ENCODE measurements at regions of chr3 and their contacts with region 1.

Region 1: DNA sequence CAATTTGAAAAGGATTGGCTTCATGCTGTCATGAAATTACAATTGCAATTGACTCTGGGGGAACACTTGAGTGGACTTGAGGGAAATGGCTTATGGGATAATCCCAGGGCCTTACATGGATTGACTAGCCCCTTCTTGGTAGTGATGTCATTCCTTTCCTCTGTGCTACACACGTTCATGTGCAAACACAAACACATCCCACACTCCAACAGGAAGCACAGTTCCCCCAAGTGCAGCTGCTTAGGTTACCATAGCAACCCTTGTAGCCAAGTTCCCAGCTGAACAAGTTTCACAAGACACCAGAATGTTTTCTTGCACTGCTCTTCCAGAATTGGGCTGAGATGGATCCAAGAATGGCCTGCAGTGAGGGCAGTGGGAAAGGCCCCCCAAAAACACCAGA is 217.0 kb downstream of the ZNF621 start:
- DNase-seq: peak; percentile 30 to 34
- ATAC-seq: peak; percentile 45 to 75
- H3K4me3 ChIP-seq: no peak overlapping the region
- H3K27ac ChIP-seq: peak overlapping the region in 1 of 4 donors; percentile 7
- H3K4me1 ChIP-seq: no peaks in the 10 kb centered on the region
- H3K27me3 ChIP-seq: no peaks in the 10 kb centered on the region
- CTCF ChIP-seq: no peak
- POLR2A ChIP-seq: no peak

Region 2: DNA sequence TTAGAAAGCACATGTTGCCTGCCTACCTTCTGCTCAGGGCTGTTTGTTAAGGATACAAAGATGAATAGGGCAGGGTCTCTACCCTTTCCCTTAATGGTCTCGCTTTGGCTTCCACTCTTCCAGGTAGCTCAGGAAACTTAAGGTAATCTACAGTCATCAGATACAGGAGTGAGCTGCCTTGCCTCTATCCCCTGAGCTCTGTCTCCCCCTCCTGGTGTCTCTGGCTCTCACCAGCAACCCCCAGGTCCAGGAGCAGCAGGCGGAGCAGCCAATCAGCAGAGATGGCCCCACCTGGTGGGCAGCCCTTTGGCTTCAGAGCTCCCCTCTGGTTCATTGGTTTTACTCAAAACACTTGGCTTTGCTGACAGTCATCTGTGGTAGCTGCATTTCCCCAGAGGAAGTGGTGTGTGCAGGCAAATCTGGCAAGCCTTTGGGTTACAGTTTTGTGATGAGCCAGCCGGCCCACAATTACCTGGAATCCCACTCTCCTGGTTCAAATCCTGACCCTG is 1453.4 kb before region 1 on chr3:
- in situ Hi-C with region 1: no loop called
- intact Hi-C with region 1: no loop called
- DNase-seq: peak; percentile 74 to 83
- ATAC-seq: peak; percentile 83
- H3K4me3 ChIP-seq: no peak overlapping the region
- H3K27ac ChIP-seq: peak overlapping the region; percentile 80 to 87 (median 84)
- H3K4me1 ChIP-seq: peaks cover 21 to 25% of the 10 kb centered on the region in 2 donors
- H3K27me3 ChIP-seq: no peaks in the 10 kb centered on the region
- CTCF ChIP-seq: peak; percentile 87 to 93 (median 90)
- POLR2A ChIP-seq: no peak

Region 3: GRCh38 chr3:40680685-40681657 is 60.8 kb before region 1 on chr3:
- in situ Hi-C with region 1: no loop called
- intact Hi-C with region 1: no loop called
- DNase-seq: peak in 1 of 2 donors; percentile 23
- ATAC-seq: peak in 1 of 2 donors; percentile 46
- H3K4me3 ChIP-seq: no peak overlapping the region
- H3K27ac ChIP-seq: no peak overlapping the region
- H3K4me1 ChIP-seq: no peaks in the 10 kb centered on the region
- H3K27me3 ChIP-seq: no peaks in the 10 kb centered on the region
- CTCF ChIP-seq: no peak
- POLR2A ChIP-seq: no peak

Region 4: DNA sequence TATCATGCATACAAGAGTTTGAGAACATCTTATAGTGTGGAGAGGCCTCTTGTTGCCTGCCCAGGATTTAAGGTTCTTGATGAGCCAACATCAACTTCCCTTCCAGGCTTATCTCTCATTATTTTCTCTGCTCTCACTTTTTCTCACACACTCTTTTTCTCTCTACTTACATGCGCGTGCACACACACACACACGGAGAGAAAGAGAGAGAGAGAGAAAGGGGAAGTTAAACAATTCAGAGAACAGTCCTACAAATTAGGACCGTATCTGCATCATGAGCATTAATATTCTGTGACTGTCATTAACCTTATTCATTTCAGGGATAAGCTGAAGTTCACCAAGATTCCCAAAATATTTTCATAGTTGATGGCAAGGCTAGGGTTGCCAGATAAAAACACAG is 52.0 kb after region 1 on chr3:
- in situ Hi-C with region 1: no loop called
- intact Hi-C with region 1: loop called (anchors 10 kb)
- DNase-seq: no peak
- ATAC-seq: no peak
- H3K4me3 ChIP-seq: no peak overlapping the region
- H3K27ac ChIP-seq: no peak overlapping the region
- H3K4me1 ChIP-seq: no peaks in the 10 kb centered on the region
- H3K27me3 ChIP-seq: no peaks in the 10 kb centered on the region
- CTCF ChIP-seq: no peak
- POLR2A ChIP-seq: no peak

Measured in gastrocnemius medialis (tissue), 4 donors.